OCI-LY7 (cell line): ENCODE measurements at regions of chr17 and their contacts with region 1.

Region 1: GRCh38 chr17:29640413-29640812 is 17.7 kb upstream of the CORO6 start:
- DNase-seq: no peak
- H3K4me3 ChIP-seq: no peak overlapping the region
- H3K27ac ChIP-seq: no peak overlapping the region
- H3K4me1 ChIP-seq: peaks cover 10% of the 10 kb centered on the region
- CTCF ChIP-seq: no peak

Region 2: DNA sequence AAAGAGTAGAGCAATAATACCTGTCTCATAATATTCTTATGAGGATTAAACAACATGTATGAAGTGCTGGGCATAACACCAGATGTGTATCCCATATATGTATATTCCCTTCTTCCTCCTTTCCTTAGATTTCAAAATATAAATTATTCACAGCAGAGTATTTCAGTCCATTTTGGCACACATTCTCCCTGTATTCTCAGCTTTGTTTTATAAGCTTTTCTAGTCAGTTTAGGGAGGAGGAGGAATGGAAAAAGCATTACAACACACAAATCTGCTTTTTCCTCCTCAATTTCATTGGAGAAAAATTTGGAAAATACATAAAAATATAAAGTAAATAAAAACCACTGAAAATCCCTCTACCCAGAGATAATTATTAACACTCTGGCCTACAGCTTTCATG is 28.9 kb after region 1 on chr17:
- CTCF ChIA-PET with region 1: no interaction called
- POLR2A ChIA-PET with region 1: no interaction called
- intact Hi-C with region 1: no loop called
- DNase-seq: no peak
- H3K4me3 ChIP-seq: no peak overlapping the region
- H3K27ac ChIP-seq: no peak overlapping the region
- H3K4me1 ChIP-seq: peaks cover 16% of the 10 kb centered on the region
- CTCF ChIP-seq: no peak

Region 3: GRCh38 chr17:29777663-29778062 is 137.2 kb after region 1 on chr17:
- CTCF ChIA-PET with region 1: no interaction called
- POLR2A ChIA-PET with region 1: interaction called, 5 read pairs
- intact Hi-C with region 1: loop called (anchors 1 kb)
- DNase-seq: no peak
- H3K4me3 ChIP-seq: no peak overlapping the region
- H3K27ac ChIP-seq: no peak overlapping the region
- H3K4me1 ChIP-seq: peaks cover 11% of the 10 kb centered on the region
- CTCF ChIP-seq: no peak

Region 4: GRCh38 chr17:30021708-30022317 is 381.4 kb after region 1 on chr17:
- CTCF ChIA-PET with region 1: no interaction called
- POLR2A ChIA-PET with region 1: no interaction called
- intact Hi-C with region 1: loop called (anchors 5 kb)
- DNase-seq: peak; percentile 67
- H3K4me3 ChIP-seq: no peak overlapping the region
- H3K27ac ChIP-seq: no peak overlapping the region
- H3K4me1 ChIP-seq: no peaks in the 10 kb centered on the region
- CTCF ChIP-seq: peak; percentile 99